BJ (cell line): ENCODE measurements at regions of chr2 and their contacts with region 1.

Region 1: GRCh38 chr2:37982147-37982582 is 57.1 kb downstream of the RMDN2 start:
- DNase-seq: peak; percentile 8
- H3K4me3 ChIP-seq: no peak overlapping the region
- H3K27me3 ChIP-seq: no peaks in the 10 kb centered on the region
- CTCF ChIP-seq: peak; percentile 83

Region 2: GRCh38 chr2:37742286-37742685 is 239.9 kb before region 1 on chr2:
- CTCF ChIA-PET with region 1: no interaction called
- POLR2A ChIA-PET with region 1: no interaction called
- DNase-seq: no peak
- H3K4me3 ChIP-seq: no peak overlapping the region
- H3K27me3 ChIP-seq: no peaks in the 10 kb centered on the region
- CTCF ChIP-seq: no peak

Region 3: GRCh38 chr2:37786854-37787253 is 195.3 kb before region 1 on chr2:
- CTCF ChIA-PET with region 1: no interaction called
- POLR2A ChIA-PET with region 1: no interaction called
- DNase-seq: no peak
- H3K4me3 ChIP-seq: no peak overlapping the region
- H3K27me3 ChIP-seq: no peaks in the 10 kb centered on the region
- CTCF ChIP-seq: no peak

Region 4: GRCh38 chr2:37993143-37993542 is 11.0 kb after region 1 on chr2:
- CTCF ChIA-PET with region 1: interaction called, 14 read pairs
- POLR2A ChIA-PET with region 1: no interaction called
- DNase-seq: no peak
- H3K4me3 ChIP-seq: no peak overlapping the region
- H3K27me3 ChIP-seq: no peaks in the 10 kb centered on the region
- CTCF ChIP-seq: no peak

Region 5: GRCh38 chr2:38115216-38116032 is 133.3 kb after region 1 on chr2:
- CTCF ChIA-PET with region 1: interaction called, 10 read pairs
- POLR2A ChIA-PET with region 1: no interaction called
- DNase-seq: no peak
- H3K4me3 ChIP-seq: no peak overlapping the region
- H3K27me3 ChIP-seq: peaks cover 6% of the 10 kb centered on the region; the same call in 1 of the 2 replicates
- CTCF ChIP-seq: peak; percentile 94